ENCODE measurements at regions of chr14 and their contacts with region 1.

Region 1: GRCh38 chr14:24431569-24432258 is 2.0 kb downstream of the KHNYN start:
- DNase-seq: peak; percentile 95
- H3K4me3 Mint-ChIP-seq: peak overlapping the region; percentile 95
- H3K27ac Mint-ChIP-seq: peak overlapping the region; percentile 97
- H3K4me1 Mint-ChIP-seq: peaks cover 39% of the 10 kb centered on the region
- H3K27me3 Mint-ChIP-seq: no peaks in the 10 kb centered on the region

Region 2: DNA sequence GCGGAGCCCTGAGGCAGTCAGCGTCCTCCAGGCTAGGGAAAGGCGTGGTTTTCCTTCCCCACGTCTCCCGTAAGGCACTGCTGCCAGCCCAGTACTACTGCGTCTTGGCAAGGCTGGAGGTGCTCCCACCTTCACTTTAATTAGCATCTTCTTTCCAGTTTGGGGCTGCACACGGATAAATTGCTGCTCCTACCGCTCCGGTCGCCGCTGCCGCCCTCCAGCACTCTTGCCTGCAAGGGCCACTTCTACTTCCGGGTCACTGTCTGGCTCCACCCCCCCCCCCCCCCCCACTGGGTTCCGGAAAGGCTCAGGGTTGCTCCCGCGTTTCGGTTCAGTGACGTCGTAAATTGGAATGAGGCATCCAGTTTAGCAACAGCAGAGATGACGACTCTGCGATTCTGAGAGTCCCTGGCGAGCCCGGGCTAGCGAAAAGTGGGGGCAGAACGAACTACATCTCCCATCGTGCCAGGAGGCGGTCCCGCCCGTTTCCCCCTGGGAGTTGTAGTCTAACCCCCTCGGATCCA is 199.5 kb before region 1 on chr14 and contains the start of gene NEDD8:
- CTCF ChIA-PET with region 1: interaction called, 3 read pairs
- intact Hi-C with region 1: loop called (anchors 1 kb)
- DNase-seq: peak; percentile 96
- H3K4me3 Mint-ChIP-seq: peak within 1 kb of the TSS; percentile 98
- H3K27ac Mint-ChIP-seq: peak within 1 kb of the TSS; percentile 97
- H3K4me1 Mint-ChIP-seq: peaks cover 52% of the 10 kb centered on the region
- H3K27me3 Mint-ChIP-seq: no peaks in the 10 kb centered on the region
- total RNA-seq, gene NEDD8: 172 to 196 TPM

Region 3: DNA sequence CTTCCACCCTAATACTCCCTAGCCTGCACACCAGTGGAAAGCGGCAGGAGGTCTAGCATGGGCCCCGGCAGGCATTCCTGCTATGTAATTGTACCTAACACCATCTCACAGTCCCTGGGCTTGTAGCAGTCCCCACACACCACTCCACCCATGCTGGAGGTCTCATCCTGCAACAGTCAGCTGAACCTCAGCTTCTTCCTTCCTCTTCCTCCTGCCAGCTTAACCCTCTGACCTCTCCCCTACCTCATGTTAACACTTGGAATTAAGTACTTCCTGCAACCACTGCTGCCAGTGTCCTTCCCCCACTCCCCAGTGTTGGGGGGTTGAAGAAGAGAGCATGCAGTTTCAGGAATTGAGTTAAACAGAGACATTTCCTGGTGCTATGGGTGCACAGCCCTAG is 104.4 kb before region 1 on chr14:
- CTCF ChIA-PET with region 1: interaction called, 617 read pairs
- intact Hi-C with region 1: loop called (anchors 1 kb)
- DNase-seq: no peak
- H3K4me3 Mint-ChIP-seq: no peak overlapping the region
- H3K27ac Mint-ChIP-seq: no peak overlapping the region
- H3K4me1 Mint-ChIP-seq: peaks cover 11% of the 10 kb centered on the region
- H3K27me3 Mint-ChIP-seq: peaks cover 7% of the 10 kb centered on the region

Region 4: GRCh38 chr14:24339284-24340151 is 92.2 kb before region 1 on chr14 and contains the start of gene RIPK3:
- CTCF ChIA-PET with region 1: interaction called, 617 read pairs
- intact Hi-C with region 1: loop called (anchors 1 kb)
- DNase-seq: peak; percentile 84
- H3K4me3 Mint-ChIP-seq: peak within 1 kb of the TSS; percentile 89
- H3K27ac Mint-ChIP-seq: peak within 1 kb of the TSS; percentile 67
- H3K4me1 Mint-ChIP-seq: peaks cover 26% of the 10 kb centered on the region
- H3K27me3 Mint-ChIP-seq: peaks cover 11% of the 10 kb centered on the region
- total RNA-seq, gene RIPK3: 5.9 to 7.6 TPM

Region 5: GRCh38 chr14:24377657-24378056 is 54.1 kb before region 1 on chr14:
- CTCF ChIA-PET with region 1: interaction called, 21 read pairs
- intact Hi-C with region 1: no loop called
- DNase-seq: no peak
- H3K4me3 Mint-ChIP-seq: no peak overlapping the region
- H3K27ac Mint-ChIP-seq: no peak overlapping the region
- H3K4me1 Mint-ChIP-seq: peaks cover 4% of the 10 kb centered on the region
- H3K27me3 Mint-ChIP-seq: peaks cover 3% of the 10 kb centered on the region

Region 6: GRCh38 chr14:24411443-24412389 is 20.0 kb before region 1 on chr14:
- CTCF ChIA-PET with region 1: interaction called, 16 read pairs
- intact Hi-C with region 1: no loop called
- DNase-seq: peak; percentile 40
- H3K4me3 Mint-ChIP-seq: no peak overlapping the region
- H3K27ac Mint-ChIP-seq: no peak overlapping the region
- H3K4me1 Mint-ChIP-seq: no peaks in the 10 kb centered on the region
- H3K27me3 Mint-ChIP-seq: no peaks in the 10 kb centered on the region

Measured in activated naive CD4-positive, alpha-beta T cell treated with anti-CD3 and anti-CD28 coated beads for 36 hours (primary cell).